ENCODE measurements at regions of chr11 and their contacts with region 1.

Region 1: DNA sequence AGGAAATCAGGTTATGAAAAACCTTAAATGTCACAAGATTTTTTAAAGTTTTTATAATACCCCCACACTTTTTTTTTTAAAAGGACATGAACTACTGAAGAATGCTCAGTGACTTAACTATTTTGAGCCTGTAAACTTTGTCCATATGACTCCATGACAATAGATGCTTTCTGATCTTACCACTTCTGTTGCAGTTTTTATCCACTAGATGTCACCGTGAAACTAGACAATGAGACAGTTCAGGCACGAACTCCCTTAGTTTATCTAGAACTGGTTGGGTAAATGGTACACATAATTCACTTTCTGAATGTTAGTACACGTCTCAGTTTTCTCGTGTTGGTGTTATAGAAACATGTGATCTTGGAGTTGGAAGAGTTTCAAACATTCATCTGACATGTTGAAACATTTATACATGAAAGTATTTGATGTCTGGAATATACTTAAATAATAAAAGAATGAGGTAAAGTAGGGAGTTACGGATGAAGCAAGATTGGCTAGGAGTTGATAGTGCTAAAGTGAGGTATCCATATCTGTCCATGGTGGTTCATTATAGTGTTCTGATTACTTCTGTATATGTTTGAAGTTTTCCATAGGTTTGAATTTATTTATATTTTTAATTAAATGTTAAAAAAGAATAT is 8.1 kb downstream of the CCDC15 start:
- DNase-seq: no peak
- ATAC-seq: peak; percentile 92 to 96 (median 94)
- H3K4me3 ChIP-seq: no peak overlapping the region
- H3K27ac ChIP-seq: no peak overlapping the region
- H3K4me1 ChIP-seq: no peaks in the 10 kb centered on the region
- H3K27me3 ChIP-seq: no peaks in the 10 kb centered on the region
- CTCF ChIP-seq: peak; percentile 73 to 83 (median 78)
- POLR2A ChIP-seq: no peak

Region 2: DNA sequence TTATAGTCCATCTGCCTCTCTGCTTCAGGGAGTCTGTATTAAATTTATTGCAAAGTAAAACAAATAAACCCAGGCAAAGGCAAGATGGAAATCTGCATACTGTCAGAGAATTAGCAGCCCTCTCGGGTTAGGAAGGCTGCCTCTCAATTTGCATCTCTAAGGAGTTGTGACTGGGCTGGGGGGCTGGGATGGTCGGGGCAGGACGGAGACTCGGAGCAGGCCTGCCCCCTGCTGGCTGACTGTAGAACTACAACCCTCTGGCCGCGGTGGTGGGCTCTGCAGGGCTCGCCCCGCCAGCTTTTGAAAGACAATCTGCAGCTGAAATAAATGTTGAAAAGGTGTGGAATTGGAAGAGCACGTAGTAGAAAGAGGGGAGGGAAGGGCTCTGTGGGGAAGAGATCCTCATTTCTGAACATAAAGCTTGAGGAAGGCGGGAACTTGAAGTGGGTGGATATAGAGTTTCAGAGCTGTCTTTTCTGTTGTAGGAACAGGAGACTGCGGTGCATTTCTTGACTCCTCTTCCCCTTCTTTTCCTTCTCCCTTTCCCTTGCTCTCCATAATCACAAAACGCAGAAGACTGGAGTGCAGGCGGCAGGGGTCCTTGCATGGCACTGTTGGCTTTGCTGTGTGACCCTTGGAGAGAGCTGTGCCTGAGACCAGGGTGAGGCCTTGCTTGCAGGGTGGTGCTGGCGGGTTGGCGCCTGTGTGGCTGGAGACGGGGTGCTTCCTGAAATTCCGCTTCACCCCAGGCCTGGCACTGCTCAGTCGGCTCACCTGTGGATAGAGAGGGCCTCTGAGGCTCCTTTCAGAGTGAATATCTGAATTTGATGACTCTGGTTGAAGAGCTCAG is 179.8 kb after region 1 on chr11:
- intact Hi-C with region 1: loop called in 1 of 2 experiments (anchors 5 kb)
- DNase-seq: peak in 2 of 3 donors; percentile 50 to 61
- ATAC-seq: peak; percentile 84 to 92 (median 88)
- H3K4me3 ChIP-seq: no peak overlapping the region
- H3K27ac ChIP-seq: no peak overlapping the region
- H3K4me1 ChIP-seq: no peaks in the 10 kb centered on the region
- H3K27me3 ChIP-seq: no peaks in the 10 kb centered on the region
- CTCF ChIP-seq: peak; percentile 89 to 96 (median 90)
- POLR2A ChIP-seq: no peak

Measured in right lobe of liver (tissue), 6 donors.